Naive thymus-derived CD4-positive, alpha-beta T cell (primary cell): ENCODE measurements at regions of chr4 and their contacts with region 1.

Region 1: GRCh38 chr4:187972135-187972534 is 23.4 kb upstream of the ZFP42 start:
- DNase-seq: no peak
- ATAC-seq: no peak
- H3K4me3 ChIP-seq: no peak overlapping the region
- H3K4me3 Mint-ChIP-seq: no peak overlapping the region
- H3K27ac ChIP-seq: no peak overlapping the region
- H3K27ac Mint-ChIP-seq: no peak overlapping the region
- H3K4me1 ChIP-seq: no peaks in the 10 kb centered on the region
- H3K4me1 Mint-ChIP-seq: no peaks in the 10 kb centered on the region
- H3K27me3 ChIP-seq: no peaks in the 10 kb centered on the region
- H3K27me3 Mint-ChIP-seq: no peaks in the 10 kb centered on the region

Region 2: GRCh38 chr4:188037003-188037713 is 65.0 kb after region 1 on chr4:
- CTCF ChIA-PET with region 1: no interaction called
- POLR2A ChIA-PET with region 1: no interaction called
- intact Hi-C with region 1: loop called in 1 of 2 experiments (anchors 5 kb)
- DNase-seq: no peak
- ATAC-seq: no peak
- H3K4me3 ChIP-seq: no peak overlapping the region
- H3K4me3 Mint-ChIP-seq: no peak overlapping the region
- H3K27ac ChIP-seq: no peak overlapping the region
- H3K27ac Mint-ChIP-seq: no peak overlapping the region
- H3K4me1 ChIP-seq: no peaks in the 10 kb centered on the region
- H3K4me1 Mint-ChIP-seq: peaks cover 0 to 9% (median 0%) of the 10 kb centered on the region in 7 donors
- H3K27me3 ChIP-seq: no peaks in the 10 kb centered on the region
- H3K27me3 Mint-ChIP-seq: peaks cover 0 to 11% (median 5%) of the 10 kb centered on the region in 5 donors